ENCODE measurements at regions of chr1 and their contacts with region 1.

Region 1: GRCh38 chr1:112395821-112396652 is at the start of gene CTTNBP2NL:
- DNase-seq: peak; percentile 93
- ATAC-seq: peak; percentile 91
- H3K4me3 ChIP-seq: peak within 1 kb of the TSS; percentile 85
- H3K27ac ChIP-seq: peak within 1 kb of the TSS; percentile 96
- H3K4me1 ChIP-seq: peaks cover 11% of the 10 kb centered on the region
- H3K27me3 ChIP-seq: no peaks in the 10 kb centered on the region
- CTCF ChIP-seq: no peak
- POLR2A ChIP-seq: peak; percentile 52; the same call in 1 of the 2 replicates
- RAD21 ChIP-seq: no peak
- total RNA-seq, gene CTTNBP2NL: 22.0 and 31.7 TPM in 2 replicates

Region 2: DNA sequence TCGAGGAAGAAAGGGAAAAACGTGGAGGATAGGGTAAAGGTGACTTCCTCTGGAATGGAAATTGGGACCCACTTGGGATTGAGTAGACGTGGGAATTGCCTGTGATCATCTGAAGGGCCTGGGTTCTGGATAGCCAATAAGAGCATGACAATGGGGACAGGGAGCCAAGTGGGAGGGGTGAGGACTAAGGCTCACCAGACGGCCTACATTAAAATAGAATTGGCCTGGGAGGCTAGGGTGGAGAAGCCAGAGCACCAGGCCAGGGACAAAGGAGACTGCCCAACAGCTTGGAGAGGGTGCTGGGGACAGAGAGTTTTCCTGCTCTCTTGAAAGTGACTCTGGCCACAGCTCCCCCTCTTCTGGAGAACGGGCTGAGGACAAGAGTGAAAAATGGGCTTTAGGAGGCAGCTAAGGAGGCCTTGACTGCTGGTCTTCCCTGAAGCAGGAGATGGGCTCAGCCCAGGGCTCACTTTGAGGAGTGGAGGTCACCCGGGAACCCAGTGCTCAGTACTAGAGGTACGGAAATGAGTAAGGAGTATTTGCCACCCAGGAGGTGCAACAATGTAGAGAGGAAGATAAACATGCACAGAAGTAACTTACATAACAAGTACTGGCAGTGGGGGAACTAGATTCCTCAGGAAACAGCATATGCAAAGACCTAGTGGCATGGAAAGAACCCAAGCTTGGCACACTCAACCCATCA is 675.6 kb before region 1 on chr1:
- CTCF ChIA-PET with region 1: no interaction called
- POLR2A ChIA-PET with region 1: interaction called, 11 read pairs
- dilution Hi-C with region 1: no loop called
- in situ Hi-C with region 1: no loop called
- intact Hi-C with region 1: no loop called
- DNase-seq: no peak
- ATAC-seq: no peak
- H3K4me3 ChIP-seq: no peak overlapping the region
- H3K27ac ChIP-seq: no peak overlapping the region
- H3K4me1 ChIP-seq: peaks cover 12% of the 10 kb centered on the region
- H3K27me3 ChIP-seq: no peaks in the 10 kb centered on the region
- CTCF ChIP-seq: no peak
- POLR2A ChIP-seq: no peak
- RAD21 ChIP-seq: no peak

Region 3: GRCh38 chr1:112457955-112458354 is 61.9 kb after region 1 on chr1:
- CTCF ChIA-PET with region 1: interaction called, 4 read pairs
- POLR2A ChIA-PET with region 1: interaction called, 13 read pairs
- dilution Hi-C with region 1: no loop called
- in situ Hi-C with region 1: loop called (anchors 5 kb)
- intact Hi-C with region 1: no loop called
- DNase-seq: peak; percentile 64
- ATAC-seq: no peak
- H3K4me3 ChIP-seq: no peak overlapping the region
- H3K27ac ChIP-seq: peak overlapping the region; percentile 57; the same call in 1 of the 2 replicates
- H3K4me1 ChIP-seq: peaks cover 30% of the 10 kb centered on the region
- H3K27me3 ChIP-seq: no peaks in the 10 kb centered on the region
- CTCF ChIP-seq: no peak
- POLR2A ChIP-seq: no peak
- RAD21 ChIP-seq: no peak

Region 4: GRCh38 chr1:112466078-112466660 is 70.1 kb after region 1 on chr1:
- CTCF ChIA-PET with region 1: interaction called, 14 read pairs
- POLR2A ChIA-PET with region 1: interaction called, 3 read pairs
- dilution Hi-C with region 1: no loop called
- in situ Hi-C with region 1: loop called (anchors 5 kb)
- intact Hi-C with region 1: loop called (anchors 1 kb)
- DNase-seq: peak; percentile 94
- ATAC-seq: peak; percentile 85
- H3K4me3 ChIP-seq: peak overlapping the region; percentile 26
- H3K27ac ChIP-seq: peak overlapping the region; percentile 41
- H3K4me1 ChIP-seq: peaks cover 13% of the 10 kb centered on the region
- H3K27me3 ChIP-seq: no peaks in the 10 kb centered on the region
- CTCF ChIP-seq: peak; percentile 87
- POLR2A ChIP-seq: 0 out of 2 replicates have a peak, but pooled peaks have one; percentile 12
- RAD21 ChIP-seq: peak; percentile 81

Region 5: GRCh38 chr1:112788561-112788960 is 392.5 kb after region 1 on chr1:
- CTCF ChIA-PET with region 1: no interaction called
- POLR2A ChIA-PET with region 1: no interaction called
- dilution Hi-C with region 1: no loop called
- in situ Hi-C with region 1: no loop called
- intact Hi-C with region 1: no loop called
- DNase-seq: peak; percentile 72
- ATAC-seq: peak; percentile 25; the same call in 1 of the 2 replicates
- H3K4me3 ChIP-seq: no peak overlapping the region
- H3K27ac ChIP-seq: no peak overlapping the region
- H3K4me1 ChIP-seq: no peaks in the 10 kb centered on the region
- H3K27me3 ChIP-seq: peaks cover 2% of the 10 kb centered on the region
- CTCF ChIP-seq: no peak
- POLR2A ChIP-seq: no peak
- RAD21 ChIP-seq: no peak